T-cell (primary cell): ENCODE measurements at regions of chr11 and their contacts with region 1.

Region 1: DNA sequence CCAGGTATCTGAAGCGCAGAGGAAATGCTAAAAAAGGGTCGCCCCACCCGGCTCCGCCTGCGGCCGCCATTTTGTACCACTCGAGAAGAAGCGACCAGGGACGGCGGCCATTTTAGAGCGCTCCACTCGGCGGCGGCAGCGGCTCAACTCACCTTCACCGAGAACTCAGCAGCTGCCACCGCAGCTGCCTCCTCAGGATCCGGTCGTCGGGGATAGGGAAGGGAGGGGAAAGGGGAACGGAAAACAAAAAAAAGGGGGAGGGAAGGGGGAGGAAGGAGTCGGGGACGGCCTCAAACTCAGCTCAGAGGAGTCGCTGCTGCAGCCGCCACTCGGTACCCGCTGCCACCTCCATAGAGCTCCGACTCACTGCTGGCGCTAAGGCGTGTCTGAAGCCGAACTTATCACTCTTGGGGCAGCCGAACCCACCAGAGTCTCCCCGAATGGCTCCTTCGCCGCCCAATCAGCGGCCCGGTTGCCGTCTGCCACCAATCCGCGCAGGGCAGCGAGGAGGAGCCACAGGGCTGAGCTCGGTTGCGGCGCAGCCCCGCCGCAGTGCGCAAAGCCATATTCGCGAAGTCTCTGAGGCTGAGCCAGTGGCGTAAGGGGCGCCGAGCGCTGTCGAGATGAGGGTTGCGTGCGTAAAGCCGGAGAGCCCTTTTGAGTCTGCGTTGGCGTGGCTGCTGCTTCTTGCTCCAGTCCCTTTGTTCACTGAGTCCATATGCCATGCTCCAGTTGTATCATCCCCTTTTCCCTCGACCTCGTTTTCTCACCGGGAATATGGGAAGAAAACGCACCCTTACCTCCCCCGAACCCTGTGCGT is at the start of gene EIF4G2:
- DNase-seq: peak; percentile 95 to 100 (median 98)
- ATAC-seq: peak; percentile 90 to 91 (median 91)
- H3K4me3 ChIP-seq: peak within 1 kb of the TSS; percentile 94
- H3K4me3 Mint-ChIP-seq: peak within 1 kb of the TSS; percentile 91 to 95 (median 94)
- H3K27ac ChIP-seq: peak within 1 kb of the TSS; percentile 95
- H3K27ac Mint-ChIP-seq: peak within 1 kb of the TSS; percentile 98
- H3K4me1 ChIP-seq: peaks cover 24 to 27% of the 10 kb centered on the region in 2 experiments
- H3K4me1 Mint-ChIP-seq: peaks cover 43 to 52% (median 48%) of the 10 kb centered on the region in 3 donors
- H3K27me3 ChIP-seq: peaks cover 0 to 4% of the 10 kb centered on the region in 2 experiments
- H3K27me3 Mint-ChIP-seq: no peaks in the 10 kb centered on the region
- total RNA-seq, gene EIF4G2: 575 to 1,022 (median 643) TPM

Region 2: GRCh38 chr11:10540923-10541560 is 267.7 kb before region 1 on chr11 and contains the start of gene RNF141:
- CTCF ChIA-PET with region 1: interaction called in 1 of 2 experiments, 7 read pairs
- POLR2A ChIA-PET with region 1: interaction called in 1 of 2 experiments, 13 read pairs
- DNase-seq: peak; percentile 81 to 98 (median 92)
- ATAC-seq: peak; percentile 97 to 99 (median 98)
- H3K4me3 ChIP-seq: peak within 1 kb of the TSS; percentile 82 to 86
- H3K4me3 Mint-ChIP-seq: peak within 1 kb of the TSS; percentile 87 to 91 (median 87)
- H3K27ac ChIP-seq: peak within 1 kb of the TSS; percentile 78
- H3K27ac Mint-ChIP-seq: peak within 1 kb of the TSS; percentile 75 to 86
- H3K4me1 ChIP-seq: peaks cover 2 to 12% of the 10 kb centered on the region in 2 experiments
- H3K4me1 Mint-ChIP-seq: peaks cover 22 to 37% (median 30%) of the 10 kb centered on the region in 3 donors
- H3K27me3 ChIP-seq: peaks cover 0 to 13% of the 10 kb centered on the region in 2 experiments
- H3K27me3 Mint-ChIP-seq: no peaks in the 10 kb centered on the region
- total RNA-seq, gene RNF141: 15.1 to 17.3 (median 15.3) TPM

Region 3: GRCh38 chr11:10770626-10771254 is 38.0 kb before region 1 on chr11:
- CTCF ChIA-PET with region 1: no interaction called
- POLR2A ChIA-PET with region 1: interaction called, 3 to 10 read pairs
- DNase-seq: peak in 11 of 35 experiments; percentile 5 to 45 (median 17)
- ATAC-seq: no peak
- H3K4me3 ChIP-seq: no peak overlapping the region
- H3K4me3 Mint-ChIP-seq: no peak overlapping the region
- H3K27ac ChIP-seq: no peak overlapping the region
- H3K27ac Mint-ChIP-seq: peak overlapping the region in 1 of 2 donors; percentile 48
- H3K4me1 ChIP-seq: no peaks in the 10 kb centered on the region
- H3K4me1 Mint-ChIP-seq: no peaks in the 10 kb centered on the region
- H3K27me3 ChIP-seq: no peaks in the 10 kb centered on the region
- H3K27me3 Mint-ChIP-seq: no peaks in the 10 kb centered on the region

Region 4: DNA sequence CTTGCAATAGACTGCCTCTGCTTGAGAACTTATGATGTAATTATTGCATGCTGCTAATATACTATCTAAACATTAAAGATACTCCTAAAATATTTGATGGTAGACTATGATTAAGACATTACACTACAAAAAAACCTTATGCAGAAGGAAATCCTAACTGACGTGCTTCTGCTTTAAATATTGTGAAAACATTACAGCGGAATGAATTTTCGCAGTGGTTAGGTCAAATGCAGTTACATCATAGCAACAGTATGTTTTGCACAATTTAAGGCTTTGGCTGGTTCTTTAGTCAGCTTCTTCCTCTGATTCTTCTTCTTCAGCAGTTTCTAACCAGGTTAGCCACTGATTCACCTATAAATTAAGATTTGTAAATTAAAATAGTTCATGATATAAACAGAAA is 11.2 kb before region 1 on chr11:
- CTCF ChIA-PET with region 1: interaction called, 3 to 27 read pairs
- POLR2A ChIA-PET with region 1: interaction called, 30 to 57 read pairs
- DNase-seq: no peak
- ATAC-seq: no peak
- H3K4me3 ChIP-seq: no peak overlapping the region
- H3K4me3 Mint-ChIP-seq: no peak overlapping the region
- H3K27ac ChIP-seq: no peak overlapping the region
- H3K27ac Mint-ChIP-seq: no peak overlapping the region
- H3K4me1 ChIP-seq: peaks cover 13 to 40% of the 10 kb centered on the region in 2 experiments
- H3K4me1 Mint-ChIP-seq: peaks cover 71 to 75% (median 74%) of the 10 kb centered on the region in 3 donors
- H3K27me3 ChIP-seq: peaks cover 0 to 2% of the 10 kb centered on the region in 2 experiments
- H3K27me3 Mint-ChIP-seq: peaks cover 0 to 4% of the 10 kb centered on the region in 2 donors

Region 5: GRCh38 chr11:10857709-10858438 is 49.1 kb after region 1 on chr11 and contains the start of gene ZBED5:
- CTCF ChIA-PET with region 1: interaction called, 4 to 60 read pairs
- POLR2A ChIA-PET with region 1: interaction called, 45 to 164 read pairs
- DNase-seq: peak; percentile 91 to 98 (median 94)
- ATAC-seq: peak; percentile 90 to 92 (median 91)
- H3K4me3 ChIP-seq: peak within 1 kb of the TSS; percentile 93 to 97
- H3K4me3 Mint-ChIP-seq: peak within 1 kb of the TSS; percentile 98 to 100 (median 100)
- H3K27ac ChIP-seq: peak within 1 kb of the TSS; percentile 95
- H3K27ac Mint-ChIP-seq: peak within 1 kb of the TSS; percentile 100
- H3K4me1 ChIP-seq: peaks cover 13 to 21% of the 10 kb centered on the region in 2 experiments
- H3K4me1 Mint-ChIP-seq: peaks cover 50 to 59% (median 52%) of the 10 kb centered on the region in 3 donors
- H3K27me3 ChIP-seq: no peaks in the 10 kb centered on the region
- H3K27me3 Mint-ChIP-seq: no peaks in the 10 kb centered on the region
- total RNA-seq, gene ZBED5: 70.1 to 112 (median 106) TPM

Region 6: GRCh38 chr11:10933455-10934292 is 124.9 kb after region 1 on chr11:
- CTCF ChIA-PET with region 1: interaction called, 7 to 11 read pairs
- POLR2A ChIA-PET with region 1: interaction called in 1 of 2 experiments, 7 read pairs
- DNase-seq: peak; percentile 48 to 89 (median 74)
- ATAC-seq: peak; percentile 81 to 89 (median 84)
- H3K4me3 ChIP-seq: peak overlapping the region; percentile 42 to 83
- H3K4me3 Mint-ChIP-seq: peak overlapping the region; percentile 80 to 88 (median 87)
- H3K27ac ChIP-seq: no peak overlapping the region
- H3K27ac Mint-ChIP-seq: peak overlapping the region; percentile 49 to 50
- H3K4me1 ChIP-seq: peaks cover 4 to 22% of the 10 kb centered on the region in 2 experiments
- H3K4me1 Mint-ChIP-seq: peaks cover 21 to 29% (median 22%) of the 10 kb centered on the region in 3 donors
- H3K27me3 ChIP-seq: peaks cover 4 to 43% of the 10 kb centered on the region in 2 experiments
- H3K27me3 Mint-ChIP-seq: peaks cover 27 to 28% of the 10 kb centered on the region in 2 donors

Region 7: GRCh38 chr11:11841723-11842420 is 1033.1 kb after region 1 on chr11 and contains the start of gene USP47:
- CTCF ChIA-PET with region 1: interaction called in 1 of 2 experiments, 9 read pairs
- POLR2A ChIA-PET with region 1: interaction called, 4 to 16 read pairs
- DNase-seq: peak; percentile 88 to 97 (median 94)
- ATAC-seq: peak; percentile 85 to 88 (median 86)
- H3K4me3 ChIP-seq: peak within 1 kb of the TSS; percentile 70 to 88
- H3K4me3 Mint-ChIP-seq: no peak within 1 kb of the TSS
- H3K27ac ChIP-seq: peak within 1 kb of the TSS; percentile 96
- H3K27ac Mint-ChIP-seq: no peak within 1 kb of the TSS
- H3K4me1 ChIP-seq: peaks cover 15 to 38% of the 10 kb centered on the region in 2 experiments
- H3K4me1 Mint-ChIP-seq: peaks cover 0 to 3% (median 0%) of the 10 kb centered on the region in 3 donors
- H3K27me3 ChIP-seq: no peaks in the 10 kb centered on the region
- H3K27me3 Mint-ChIP-seq: peaks cover 5 to 13% of the 10 kb centered on the region in 2 donors
- total RNA-seq, gene USP47: 49.3 to 77.6 (median 58.6) TPM